CD8-positive, alpha-beta T cell (primary cell): ENCODE measurements at regions of chr3 and their contacts with region 1.

Region 1: GRCh38 chr3:13895155-13896105 is 15.6 kb upstream of the WNT7A start:
- DNase-seq: peak; percentile 90 to 97 (median 93)
- ATAC-seq: peak; percentile 95
- H3K4me3 ChIP-seq: peak overlapping the region; percentile 70 to 72
- H3K4me3 Mint-ChIP-seq: peak overlapping the region; percentile 88
- H3K27ac ChIP-seq: peak overlapping the region; percentile 71 to 74
- H3K27ac Mint-ChIP-seq: peak overlapping the region; percentile 91
- H3K4me1 ChIP-seq: peaks cover 28% of the 10 kb centered on the region
- H3K4me1 Mint-ChIP-seq: peaks cover 35% of the 10 kb centered on the region
- H3K27me3 ChIP-seq: no peaks in the 10 kb centered on the region
- H3K27me3 Mint-ChIP-seq: no peaks in the 10 kb centered on the region
- CTCF ChIP-seq: no peak

Region 2: DNA sequence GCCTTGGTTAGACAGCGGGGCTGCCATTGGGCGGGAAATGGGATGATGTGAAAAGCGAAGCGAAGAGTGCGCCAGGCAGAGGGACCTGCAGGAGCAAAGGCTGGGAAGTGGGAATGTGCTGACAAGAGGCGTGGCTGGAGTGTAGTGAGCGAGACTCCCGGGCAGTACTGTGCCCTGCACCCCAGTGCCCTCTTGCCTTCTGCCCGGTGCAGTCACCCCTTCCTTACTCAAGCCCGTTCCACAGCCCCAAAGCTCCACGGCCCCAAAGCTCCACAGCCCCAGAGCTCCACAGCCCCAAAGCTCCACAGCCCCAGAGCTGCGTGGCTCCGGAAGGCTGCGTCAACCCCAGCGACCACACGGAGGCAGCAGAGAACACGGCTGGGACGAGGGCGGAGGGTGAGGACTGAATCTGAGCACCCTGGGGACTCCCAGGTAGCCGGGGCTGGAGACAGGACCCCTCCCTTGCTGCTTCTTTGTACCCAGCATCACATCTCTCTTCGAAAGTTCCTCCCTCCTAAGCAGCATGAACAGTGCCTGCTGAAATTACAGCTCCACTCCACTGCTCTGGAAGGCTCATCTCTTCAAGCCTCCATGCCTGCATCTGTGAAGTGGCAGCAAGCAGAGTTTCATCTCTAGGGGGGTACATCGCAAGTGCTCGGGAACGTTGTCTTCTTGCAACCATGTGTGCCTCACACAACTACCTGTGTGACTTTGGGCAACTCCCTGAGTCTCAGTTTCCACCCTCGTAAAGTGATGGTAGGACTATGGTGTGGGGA is 237.6 kb before region 1 on chr3:
- CTCF ChIA-PET with region 1: interaction called, 670 read pairs
- POLR2A ChIA-PET with region 1: interaction called, 6 read pairs
- intact Hi-C with region 1: no loop called
- DNase-seq: peak; percentile 44 to 80 (median 68)
- ATAC-seq: peak; percentile 83
- H3K4me3 ChIP-seq: no peak overlapping the region
- H3K4me3 Mint-ChIP-seq: no peak overlapping the region
- H3K27ac ChIP-seq: no peak overlapping the region
- H3K27ac Mint-ChIP-seq: no peak overlapping the region
- H3K4me1 ChIP-seq: peaks cover 26% of the 10 kb centered on the region
- H3K4me1 Mint-ChIP-seq: peaks cover 29% of the 10 kb centered on the region
- H3K27me3 ChIP-seq: no peaks in the 10 kb centered on the region
- H3K27me3 Mint-ChIP-seq: peaks cover 12% of the 10 kb centered on the region
- CTCF ChIP-seq: peak; percentile 66

Region 3: GRCh38 chr3:13839726-13840320 is 55.6 kb before region 1 on chr3:
- CTCF ChIA-PET with region 1: no interaction called
- POLR2A ChIA-PET with region 1: no interaction called
- intact Hi-C with region 1: no loop called
- DNase-seq: no peak
- ATAC-seq: no peak
- H3K4me3 ChIP-seq: no peak overlapping the region
- H3K4me3 Mint-ChIP-seq: no peak overlapping the region
- H3K27ac ChIP-seq: no peak overlapping the region
- H3K27ac Mint-ChIP-seq: no peak overlapping the region
- H3K4me1 ChIP-seq: no peaks in the 10 kb centered on the region
- H3K4me1 Mint-ChIP-seq: no peaks in the 10 kb centered on the region
- H3K27me3 ChIP-seq: no peaks in the 10 kb centered on the region
- H3K27me3 Mint-ChIP-seq: peaks cover 3% of the 10 kb centered on the region
- CTCF ChIP-seq: no peak

Region 4: DNA sequence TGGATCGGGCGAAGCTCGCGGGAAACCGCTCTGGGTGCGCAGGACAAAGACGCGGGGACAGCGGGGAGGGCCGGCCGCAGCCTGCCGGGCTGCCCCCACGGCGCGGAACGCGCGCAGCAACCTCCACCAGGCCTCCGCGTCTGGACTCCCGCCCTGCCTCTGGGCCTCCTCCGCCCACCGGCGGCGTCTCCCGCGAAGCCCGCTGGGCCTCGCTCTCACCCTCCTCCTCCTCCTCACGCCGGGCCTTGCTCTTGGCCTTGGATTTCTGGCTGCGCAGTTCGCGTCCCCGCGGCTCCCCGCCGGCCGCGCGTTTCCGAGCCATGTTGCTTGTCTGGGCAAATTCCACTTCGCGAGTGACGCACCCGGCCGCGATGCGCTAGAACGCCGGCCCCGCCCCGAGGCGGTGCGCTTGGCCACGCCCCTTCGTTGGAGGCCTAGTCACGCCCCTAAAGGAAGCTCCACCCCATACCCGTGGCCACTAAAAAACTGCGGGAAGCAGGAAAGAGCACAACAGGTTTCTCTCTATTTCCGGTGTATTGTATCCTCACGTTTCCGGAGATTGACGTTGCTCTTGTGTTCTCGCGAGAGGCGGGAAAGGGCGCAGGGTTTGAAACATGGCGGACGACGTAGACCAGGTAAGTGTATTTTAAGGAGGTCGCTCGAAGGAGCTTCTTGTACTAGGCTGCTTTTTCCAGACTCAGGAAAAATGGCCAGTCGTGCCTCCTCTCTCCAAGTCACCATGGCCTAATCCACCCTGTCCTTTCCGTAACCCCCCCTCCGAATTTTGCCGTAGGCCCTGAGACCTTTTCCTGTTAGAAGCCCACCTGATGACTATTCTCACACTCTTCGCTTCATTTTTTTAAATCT is 283.1 kb after region 1 on chr3 and contains the starts of genes LSM3 and XPC:
- CTCF ChIA-PET with region 1: interaction called, 10 read pairs
- POLR2A ChIA-PET with region 1: interaction called, 11 read pairs
- intact Hi-C with region 1: loop called (anchors 1 to 2 kb)
- DNase-seq: peak; percentile 96 to 99 (median 98)
- ATAC-seq: peak; percentile 94
- H3K4me3 ChIP-seq: peak within 1 kb of the TSS; percentile 68
- H3K4me3 Mint-ChIP-seq: peak within 1 kb of the TSS; percentile 96
- H3K27ac ChIP-seq: peak within 1 kb of the TSS; percentile 91 to 99
- H3K27ac Mint-ChIP-seq: peak within 1 kb of the TSS; percentile 99
- H3K4me1 ChIP-seq: peaks cover 49% of the 10 kb centered on the region
- H3K4me1 Mint-ChIP-seq: peaks cover 78% of the 10 kb centered on the region
- H3K27me3 ChIP-seq: no peaks in the 10 kb centered on the region
- H3K27me3 Mint-ChIP-seq: no peaks in the 10 kb centered on the region
- CTCF ChIP-seq: no peak
- total RNA-seq, gene LSM3: 7.5 to 8.3 TPM
- total RNA-seq, gene XPC: 51.5 to 56.5 TPM

Region 5: DNA sequence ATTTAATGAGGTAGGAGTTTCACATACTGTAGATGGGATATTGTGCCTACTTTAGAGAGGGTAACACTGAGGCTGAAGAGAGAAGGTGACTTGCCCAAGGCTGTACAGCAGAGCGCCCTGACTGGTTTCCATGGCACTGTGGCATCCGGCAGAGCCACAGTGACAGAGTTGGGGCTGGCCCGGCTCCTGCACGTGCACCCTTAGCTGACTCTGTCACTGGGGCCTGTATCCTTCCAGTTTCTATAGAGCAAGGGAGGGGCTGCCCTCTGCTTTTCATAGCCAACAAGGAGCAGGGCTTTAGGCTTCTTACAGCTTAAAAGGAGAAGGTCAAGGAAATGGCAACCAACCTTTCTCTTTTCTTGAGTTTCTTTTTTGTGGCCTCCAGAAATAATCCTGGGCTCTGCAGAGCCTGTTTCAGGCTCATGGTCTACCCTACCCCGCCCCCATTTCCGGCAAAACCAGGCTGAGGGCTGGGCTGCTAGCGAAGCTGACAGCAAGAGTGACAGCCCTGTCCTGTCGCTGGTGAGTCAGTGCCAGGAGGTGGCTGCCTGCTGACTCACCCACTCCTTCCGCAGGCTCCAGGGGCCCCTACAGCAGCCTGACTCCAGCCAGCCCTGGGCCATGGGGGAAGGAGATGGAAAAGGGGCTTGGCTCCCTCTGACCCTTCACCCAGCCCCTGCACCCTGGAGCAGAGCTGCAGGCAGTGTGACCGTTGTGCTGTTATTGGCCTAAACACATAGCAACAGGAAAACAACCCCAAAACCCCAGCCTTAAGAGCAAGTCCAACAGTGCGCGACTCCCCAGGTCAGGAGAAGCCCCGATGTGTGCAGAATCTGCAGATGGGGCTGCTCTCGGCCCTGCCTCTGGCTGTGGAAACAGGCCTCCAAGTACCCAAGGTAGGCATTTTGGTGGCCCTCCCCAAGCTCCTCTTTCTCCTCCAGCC is 536.7 kb after region 1 on chr3:
- CTCF ChIA-PET with region 1: interaction called, 4 read pairs
- POLR2A ChIA-PET with region 1: no interaction called
- intact Hi-C with region 1: loop called in 1 of 2 experiments (anchors 1 kb)
- DNase-seq: peak; percentile 85 to 97 (median 95)
- ATAC-seq: peak; percentile 83
- H3K4me3 ChIP-seq: peak overlapping the region in 1 of 2 experiments; percentile 27
- H3K4me3 Mint-ChIP-seq: peak overlapping the region; percentile 75
- H3K27ac ChIP-seq: peak overlapping the region; percentile 66 to 95
- H3K27ac Mint-ChIP-seq: peak overlapping the region; percentile 99
- H3K4me1 ChIP-seq: peaks cover 75% of the 10 kb centered on the region
- H3K4me1 Mint-ChIP-seq: peaks cover 85% of the 10 kb centered on the region
- H3K27me3 ChIP-seq: no peaks in the 10 kb centered on the region
- H3K27me3 Mint-ChIP-seq: no peaks in the 10 kb centered on the region
- CTCF ChIP-seq: no peak

Region 6: GRCh38 chr3:14651440-14652251 is 756.2 kb after region 1 on chr3 and contains the start of gene CCDC174:
- CTCF ChIA-PET with region 1: interaction called, 6 read pairs
- POLR2A ChIA-PET with region 1: interaction called, 4 read pairs
- intact Hi-C with region 1: loop called (anchors 2 to 5 kb)
- DNase-seq: peak; percentile 89 to 100 (median 93)
- ATAC-seq: peak; percentile 97
- H3K4me3 ChIP-seq: peak within 1 kb of the TSS; percentile 74 to 85
- H3K4me3 Mint-ChIP-seq: peak within 1 kb of the TSS; percentile 98
- H3K27ac ChIP-seq: peak within 1 kb of the TSS; percentile 95 to 97
- H3K27ac Mint-ChIP-seq: peak within 1 kb of the TSS; percentile 99
- H3K4me1 ChIP-seq: peaks cover 31% of the 10 kb centered on the region
- H3K4me1 Mint-ChIP-seq: peaks cover 60% of the 10 kb centered on the region
- H3K27me3 ChIP-seq: no peaks in the 10 kb centered on the region
- H3K27me3 Mint-ChIP-seq: no peaks in the 10 kb centered on the region
- CTCF ChIP-seq: no peak
- total RNA-seq, gene CCDC174: 48.8 to 50.9 TPM